CD4-positive, alpha-beta T cell (primary cell): ENCODE measurements at regions of chr19 and their contacts with region 1.

Region 1: GRCh38 chr19:54478677-54479266 is 5.7 kb upstream of the CDC42EP5 start:
- DNase-seq: peak in 3 of 14 experiments; percentile 33 to 67 (median 66)
- ATAC-seq: peak; percentile 44
- H3K4me3 ChIP-seq: no peak overlapping the region
- H3K4me3 Mint-ChIP-seq: no peak overlapping the region
- H3K27ac ChIP-seq: no peak overlapping the region
- H3K27ac Mint-ChIP-seq: no peak overlapping the region
- H3K4me1 ChIP-seq: peaks cover 5% of the 10 kb centered on the region
- H3K4me1 Mint-ChIP-seq: peaks cover 5% of the 10 kb centered on the region
- H3K27me3 ChIP-seq: peaks cover 3 to 14% of the 10 kb centered on the region in 2 experiments
- H3K27me3 Mint-ChIP-seq: peaks cover 49% of the 10 kb centered on the region
- CTCF ChIP-seq: peak; percentile 66

Region 2: DNA sequence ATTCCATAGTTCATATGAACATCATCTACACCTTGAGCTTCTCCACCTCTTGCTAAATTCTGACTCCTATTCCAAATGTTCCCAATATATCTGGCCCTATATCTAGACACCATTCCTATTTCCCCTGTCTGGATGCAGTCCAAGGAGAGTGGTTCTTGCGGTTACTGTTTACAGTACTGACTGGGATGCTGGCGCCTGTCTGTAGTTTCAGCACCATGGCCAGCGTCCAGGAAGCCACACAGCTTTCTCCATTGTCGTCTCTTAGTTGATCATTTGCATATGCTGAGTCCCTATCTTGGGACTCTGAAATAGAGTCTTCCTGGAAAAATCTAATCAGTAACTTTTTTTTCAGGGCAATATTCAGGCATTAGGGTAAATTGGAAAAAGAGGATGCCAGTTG is 38.7 kb after region 1 on chr19:
- CTCF ChIA-PET with region 1: no interaction called
- POLR2A ChIA-PET with region 1: no interaction called
- intact Hi-C with region 1: no loop called
- DNase-seq: peak; percentile 20 to 75 (median 37)
- ATAC-seq: peak; percentile 49
- H3K4me3 ChIP-seq: no peak overlapping the region
- H3K4me3 Mint-ChIP-seq: no peak overlapping the region
- H3K27ac ChIP-seq: no peak overlapping the region
- H3K27ac Mint-ChIP-seq: no peak overlapping the region
- H3K4me1 ChIP-seq: peaks cover 15% of the 10 kb centered on the region
- H3K4me1 Mint-ChIP-seq: peaks cover 37% of the 10 kb centered on the region
- H3K27me3 ChIP-seq: peaks cover 0 to 9% of the 10 kb centered on the region in 2 experiments
- H3K27me3 Mint-ChIP-seq: peaks cover 36% of the 10 kb centered on the region
- CTCF ChIP-seq: no peak

Region 3: GRCh38 chr19:54674021-54674617 is 195.3 kb after region 1 on chr19:
- CTCF ChIA-PET with region 1: no interaction called
- POLR2A ChIA-PET with region 1: no interaction called
- intact Hi-C with region 1: loop called (anchors 1 kb)
- DNase-seq: peak in 3 of 14 experiments; percentile 25 to 51 (median 38)
- ATAC-seq: no peak
- H3K4me3 ChIP-seq: no peak overlapping the region
- H3K4me3 Mint-ChIP-seq: no peak overlapping the region
- H3K27ac ChIP-seq: no peak overlapping the region
- H3K27ac Mint-ChIP-seq: no peak overlapping the region
- H3K4me1 ChIP-seq: no peaks in the 10 kb centered on the region
- H3K4me1 Mint-ChIP-seq: no peaks in the 10 kb centered on the region
- H3K27me3 ChIP-seq: peaks cover 18 to 20% of the 10 kb centered on the region in 2 experiments
- H3K27me3 Mint-ChIP-seq: peaks cover 32% of the 10 kb centered on the region
- CTCF ChIP-seq: peak; percentile 36